Posterior vena cava (tissue), 2 donors: ENCODE measurements at regions of chr5 and their contacts with region 1.

Region 1: GRCh38 chr5:151771259-151772028 is at the start of gene G3BP1:
- DNase-seq: peak; percentile 100
- total RNA-seq, gene G3BP1: 117 to 130 TPM

Region 2: DNA sequence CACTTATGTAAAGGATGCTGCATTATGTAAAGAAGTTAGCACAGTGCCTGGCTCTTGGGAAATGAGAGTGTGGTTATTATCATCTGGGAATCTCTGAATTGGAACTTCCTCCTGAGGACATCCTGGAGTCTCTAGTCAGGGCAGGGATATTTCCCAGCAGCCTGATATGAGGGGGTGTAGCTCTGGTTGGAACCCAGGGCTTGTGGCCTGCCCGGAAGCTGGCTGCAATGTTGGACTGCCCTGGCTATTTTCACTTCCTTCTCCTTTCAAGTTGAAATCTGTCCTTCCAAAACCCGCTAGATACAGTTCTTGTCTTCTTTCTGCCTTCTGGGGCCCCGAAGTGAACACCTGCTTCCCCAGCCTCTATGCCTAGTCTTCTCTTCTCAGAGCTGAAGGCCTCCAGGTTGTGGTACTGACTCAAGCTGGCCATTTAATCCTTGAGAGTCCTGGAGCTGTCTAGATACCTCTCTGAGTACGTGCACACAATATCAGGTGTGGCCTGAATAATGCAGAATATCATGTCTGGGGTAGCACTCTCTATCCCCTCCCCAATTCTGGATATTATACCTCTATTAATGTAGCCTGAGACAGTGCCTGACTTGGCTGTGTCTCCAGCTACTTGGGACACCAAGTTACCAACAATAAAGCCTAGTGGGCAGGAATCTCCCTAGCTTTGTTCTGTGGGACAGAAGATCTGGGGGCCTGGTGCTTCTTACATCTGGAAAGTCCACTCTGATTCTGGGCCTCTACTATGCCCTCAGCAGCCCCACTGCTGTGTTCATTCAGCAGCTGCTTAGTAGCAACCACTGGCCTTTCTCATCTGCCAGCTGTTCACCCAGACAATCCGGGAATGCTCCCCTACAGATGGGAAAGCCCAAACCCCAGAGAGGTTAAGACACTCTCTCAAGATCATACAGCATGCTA is 1536.6 kb before region 1 on chr5:
- intact Hi-C with region 1: loop called in 1 of 2 experiments (anchors 5 kb)
- DNase-seq: no peak

Region 3: GRCh38 chr5:150544611-150545219 is 1226.7 kb before region 1 on chr5:
- intact Hi-C with region 1: no loop called
- DNase-seq: peak; percentile 91

Region 4: GRCh38 chr5:151721087-151721646 is 50.3 kb before region 1 on chr5:
- intact Hi-C with region 1: no loop called
- DNase-seq: no peak